MCF 10A (cell line): ENCODE measurements at regions of chr17 and their contacts with region 1.

Region 1: DNA sequence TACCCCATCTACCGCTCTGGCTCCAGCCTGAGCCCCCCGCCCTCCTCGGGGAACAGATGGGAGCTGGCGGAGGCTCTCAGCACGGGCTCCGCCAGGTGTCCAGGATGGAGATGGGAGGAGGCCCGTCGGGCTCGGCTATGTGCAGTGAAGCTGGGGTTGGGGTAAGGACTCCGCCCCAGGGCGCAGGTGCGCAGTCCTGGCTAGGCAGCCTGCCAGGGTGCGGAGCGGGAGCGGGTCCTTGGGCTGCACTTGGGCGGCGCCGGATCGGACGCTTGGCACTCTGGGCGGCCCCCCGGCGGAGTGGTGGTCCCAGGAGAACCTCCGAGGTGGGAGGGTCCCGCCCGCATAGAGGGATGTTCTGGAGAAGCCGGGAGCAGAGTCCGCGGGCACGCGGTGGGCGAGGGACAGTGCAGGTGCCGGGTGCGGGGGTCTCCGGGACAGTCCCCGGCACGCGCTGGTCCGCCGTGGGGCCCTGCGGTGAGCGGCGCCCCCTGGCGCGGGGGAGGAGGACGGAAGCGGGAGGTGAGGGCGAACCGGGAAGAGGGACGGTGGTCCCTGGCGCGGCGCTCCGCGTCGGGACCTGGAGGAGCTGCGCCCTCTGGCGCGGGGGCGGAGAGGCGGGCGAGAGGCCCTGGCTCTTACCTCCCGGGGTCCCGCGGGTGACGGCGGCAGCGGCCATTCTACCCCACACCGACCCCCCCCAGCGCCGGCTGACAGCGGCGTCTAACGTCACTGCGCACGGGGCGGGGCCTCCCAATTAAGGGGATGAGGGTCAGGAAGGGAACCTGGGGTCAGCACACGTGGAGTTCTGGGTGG is at the start of gene CAMTA2:
- DNase-seq: peak; percentile 67
- H3K4me3 Mint-ChIP-seq: peak within 1 kb of the TSS; percentile 87
- H3K27ac Mint-ChIP-seq: peak within 1 kb of the TSS; percentile 84
- H3K4me1 Mint-ChIP-seq: peaks cover 28% of the 10 kb centered on the region
- H3K27me3 Mint-ChIP-seq: no peaks in the 10 kb centered on the region
- CTCF ChIP-seq: peak; percentile 60
- total RNA-seq, gene CAMTA2: 126 and 154 TPM in 2 replicates

Region 2: DNA sequence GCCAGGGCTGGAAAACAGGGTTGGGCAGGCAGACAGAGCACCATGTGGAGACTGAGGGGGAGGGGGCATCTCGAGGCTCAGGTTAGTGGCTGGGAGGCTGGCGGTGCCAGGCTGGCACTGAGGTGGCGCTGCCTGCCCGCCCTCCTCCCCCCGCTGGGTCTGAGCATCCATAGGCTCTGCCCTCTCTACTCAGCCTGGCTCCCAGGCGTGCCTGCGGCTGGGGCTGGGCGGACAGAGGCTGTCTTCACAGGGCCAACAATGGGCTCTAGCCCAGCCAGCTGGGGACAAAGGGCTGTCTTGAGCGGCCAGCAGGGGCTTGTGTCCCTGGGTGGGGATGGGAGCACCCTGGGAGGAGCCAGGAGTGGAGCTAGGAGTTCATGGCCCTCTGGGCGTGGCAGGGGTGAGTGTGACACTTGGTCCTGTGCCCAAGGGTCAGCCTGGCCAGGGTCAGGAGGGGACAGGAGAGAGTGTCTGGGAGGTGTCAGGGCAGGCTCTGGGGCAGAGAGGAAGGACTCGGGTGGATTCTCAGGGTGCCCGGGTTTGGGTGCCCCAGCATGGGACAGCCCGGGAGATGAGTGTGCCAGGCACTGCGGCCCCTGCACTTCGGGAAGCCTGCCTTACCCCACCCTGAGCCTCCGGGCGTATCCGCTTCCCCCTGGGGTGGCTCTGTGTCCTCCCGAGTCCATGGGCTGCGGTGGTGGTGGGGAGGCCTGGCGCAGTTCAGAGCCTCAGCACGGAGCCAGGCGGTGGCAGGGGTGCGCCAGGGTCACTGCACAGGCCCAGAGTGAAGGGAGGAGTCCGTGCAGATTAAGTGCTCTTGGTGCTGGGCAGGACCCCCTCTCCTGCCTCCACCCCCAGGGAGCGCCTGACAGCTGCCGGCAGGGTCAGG is 452.9 kb before region 1 on chr17:
- CTCF ChIA-PET with region 1: no interaction called
- POLR2A ChIA-PET with region 1: no interaction called
- intact Hi-C with region 1: no loop called
- DNase-seq: peak; percentile 17
- H3K4me3 Mint-ChIP-seq: no peak overlapping the region
- H3K27ac Mint-ChIP-seq: no peak overlapping the region
- H3K4me1 Mint-ChIP-seq: peaks cover 5% of the 10 kb centered on the region
- H3K27me3 Mint-ChIP-seq: peaks cover 26% of the 10 kb centered on the region
- CTCF ChIP-seq: no peak

Region 3: GRCh38 chr17:4997302-4998026 is 10.3 kb after region 1 on chr17 and contains the starts of genes INCA1 and KIF1C:
- CTCF ChIA-PET with region 1: interaction called, 4 read pairs
- POLR2A ChIA-PET with region 1: interaction called, 48 read pairs
- intact Hi-C with region 1: no loop called
- DNase-seq: peak; percentile 90
- H3K4me3 Mint-ChIP-seq: peak within 1 kb of the TSS; percentile 97
- H3K27ac Mint-ChIP-seq: peak within 1 kb of the TSS; percentile 86
- H3K4me1 Mint-ChIP-seq: peaks cover 23% of the 10 kb centered on the region
- H3K27me3 Mint-ChIP-seq: no peaks in the 10 kb centered on the region
- CTCF ChIP-seq: no peak
- total RNA-seq, gene INCA1: 0.44 and 0.49 TPM in 2 replicates
- total RNA-seq, gene KIF1C: 84.8 and 100 TPM in 2 replicates

Region 4: DNA sequence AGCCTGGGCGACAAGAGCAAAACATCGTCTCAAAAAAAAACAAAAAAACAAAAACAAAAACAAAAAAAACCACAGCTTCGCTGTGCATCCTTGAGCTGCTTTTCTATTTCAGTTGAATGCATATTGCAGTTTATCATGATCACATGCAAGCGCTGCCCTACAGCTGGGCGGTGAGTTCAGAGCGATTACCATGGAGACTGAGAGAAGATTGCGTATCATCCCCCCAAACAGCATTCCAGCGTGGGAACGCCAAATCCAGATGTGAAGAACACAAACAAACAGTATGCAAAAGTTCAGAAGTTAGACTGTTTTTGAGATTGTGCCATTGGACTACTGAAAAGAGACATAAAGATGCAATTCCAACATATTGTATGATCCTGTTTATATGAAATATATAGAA is 63.1 kb after region 1 on chr17:
- CTCF ChIA-PET with region 1: no interaction called
- POLR2A ChIA-PET with region 1: no interaction called
- intact Hi-C with region 1: no loop called
- DNase-seq: no peak
- H3K4me3 Mint-ChIP-seq: no peak overlapping the region
- H3K27ac Mint-ChIP-seq: no peak overlapping the region
- H3K4me1 Mint-ChIP-seq: no peaks in the 10 kb centered on the region
- H3K27me3 Mint-ChIP-seq: no peaks in the 10 kb centered on the region
- CTCF ChIP-seq: no peak